Natural killer cell (primary cell): ENCODE measurements at regions of chr6 and their contacts with region 1.

Region 1: DNA sequence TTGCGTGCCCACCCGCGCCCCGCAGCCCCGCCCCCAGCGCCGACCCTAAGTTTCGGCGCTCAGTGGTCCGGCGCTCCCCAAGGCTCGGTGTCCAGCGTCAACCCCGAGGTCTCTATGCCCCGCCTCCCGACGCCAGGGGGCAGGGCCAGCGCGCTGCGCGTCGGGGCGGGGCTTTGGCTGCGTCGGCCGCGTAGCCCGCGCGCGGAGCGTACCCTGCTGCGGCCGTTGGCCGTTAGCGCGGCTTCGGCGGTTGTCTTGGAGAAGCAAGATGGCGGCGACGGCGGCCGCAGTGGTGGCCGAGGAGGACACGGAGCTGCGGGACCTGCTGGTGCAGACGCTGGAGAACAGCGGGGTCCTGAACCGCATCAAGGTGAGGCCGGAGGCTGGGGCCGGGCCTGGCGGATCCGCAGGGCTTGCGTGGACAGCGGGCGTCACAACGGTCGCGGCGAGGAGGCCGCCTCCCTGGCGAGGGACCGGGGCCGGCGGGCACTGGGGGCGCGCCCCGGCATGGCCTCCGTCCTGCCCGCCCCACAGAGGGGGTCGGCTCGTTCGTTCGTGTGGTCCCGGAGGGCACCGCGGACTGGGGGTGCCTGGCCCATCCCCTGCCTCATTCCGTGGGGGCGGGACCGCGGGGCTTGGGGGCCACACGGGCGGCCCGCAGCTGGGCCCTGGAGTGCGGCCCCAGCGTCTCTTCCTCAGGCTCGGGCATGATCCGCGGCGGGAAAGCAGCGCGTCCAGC is at the start of gene CEP43:
- DNase-seq: peak; percentile 89 to 94
- ATAC-seq: peak; percentile 94 to 98 (median 94)
- H3K4me3 ChIP-seq: peak within 1 kb of the TSS; percentile 98
- H3K4me3 Mint-ChIP-seq: peak within 1 kb of the TSS; percentile 96
- H3K27ac ChIP-seq: peak within 1 kb of the TSS; percentile 32
- H3K27ac Mint-ChIP-seq: peak within 1 kb of the TSS; percentile 67 to 87
- H3K4me1 ChIP-seq: peaks cover 9% of the 10 kb centered on the region
- H3K4me1 Mint-ChIP-seq: peaks cover 28% of the 10 kb centered on the region in 2 donors
- H3K27me3 ChIP-seq: no peaks in the 10 kb centered on the region
- H3K27me3 Mint-ChIP-seq: no peaks in the 10 kb centered on the region
- CTCF ChIP-seq: no peak
- total RNA-seq, gene CEP43: 13.5 to 17.0 (median 15.4) TPM

Region 2: GRCh38 chr6:166956444-166957086 is 42.7 kb before region 1 on chr6 and contains the start of gene RNASET2:
- intact Hi-C with region 1: loop called (anchors 1 kb)
- DNase-seq: peak; percentile 97 to 100
- ATAC-seq: peak; percentile 90 to 97 (median 93)
- H3K4me3 ChIP-seq: peak within 1 kb of the TSS; percentile 53
- H3K4me3 Mint-ChIP-seq: peak within 1 kb of the TSS; percentile 86
- H3K27ac ChIP-seq: peak within 1 kb of the TSS; percentile 95
- H3K27ac Mint-ChIP-seq: peak within 1 kb of the TSS; percentile 89 to 93
- H3K4me1 ChIP-seq: peaks cover 64% of the 10 kb centered on the region
- H3K4me1 Mint-ChIP-seq: peaks cover 48 to 67% of the 10 kb centered on the region in 2 donors
- H3K27me3 ChIP-seq: no peaks in the 10 kb centered on the region
- H3K27me3 Mint-ChIP-seq: no peaks in the 10 kb centered on the region
- CTCF ChIP-seq: no peak
- total RNA-seq, gene RNASET2: 65.1 to 106 (median 84.5) TPM

Region 3: GRCh38 chr6:167341665-167342655 is 342.6 kb after region 1 on chr6:
- intact Hi-C with region 1: no loop called
- DNase-seq: no peak
- ATAC-seq: no peak
- H3K4me3 ChIP-seq: no peak overlapping the region
- H3K4me3 Mint-ChIP-seq: no peak overlapping the region
- H3K27ac ChIP-seq: no peak overlapping the region
- H3K27ac Mint-ChIP-seq: no peak overlapping the region
- H3K4me1 ChIP-seq: no peaks in the 10 kb centered on the region
- H3K4me1 Mint-ChIP-seq: no peaks in the 10 kb centered on the region
- H3K27me3 ChIP-seq: no peaks in the 10 kb centered on the region
- H3K27me3 Mint-ChIP-seq: peaks cover 11 to 14% of the 10 kb centered on the region in 2 donors
- CTCF ChIP-seq: no peak